ENCODE measurements at regions of chr9 and their contacts with region 1.

Region 1: GRCh38 chr9:72292256-72292682 is 72.7 kb downstream of the ZFAND5 start:
- DNase-seq: peak; percentile 48
- H3K4me3 Mint-ChIP-seq: no peak overlapping the region
- H3K27ac Mint-ChIP-seq: peak overlapping the region; percentile 75
- H3K4me1 Mint-ChIP-seq: peaks cover 22% of the 10 kb centered on the region
- H3K27me3 Mint-ChIP-seq: no peaks in the 10 kb centered on the region
- CTCF ChIP-seq: peak; percentile 58

Region 2: GRCh38 chr9:72220582-72220981 is 71.7 kb before region 1 on chr9:
- CTCF ChIA-PET with region 1: no interaction called
- POLR2A ChIA-PET with region 1: no interaction called
- intact Hi-C with region 1: no loop called
- DNase-seq: no peak
- H3K4me3 Mint-ChIP-seq: no peak overlapping the region
- H3K27ac Mint-ChIP-seq: no peak overlapping the region
- H3K4me1 Mint-ChIP-seq: peaks cover 6% of the 10 kb centered on the region
- H3K27me3 Mint-ChIP-seq: peaks cover 18% of the 10 kb centered on the region
- CTCF ChIP-seq: no peak

Region 3: DNA sequence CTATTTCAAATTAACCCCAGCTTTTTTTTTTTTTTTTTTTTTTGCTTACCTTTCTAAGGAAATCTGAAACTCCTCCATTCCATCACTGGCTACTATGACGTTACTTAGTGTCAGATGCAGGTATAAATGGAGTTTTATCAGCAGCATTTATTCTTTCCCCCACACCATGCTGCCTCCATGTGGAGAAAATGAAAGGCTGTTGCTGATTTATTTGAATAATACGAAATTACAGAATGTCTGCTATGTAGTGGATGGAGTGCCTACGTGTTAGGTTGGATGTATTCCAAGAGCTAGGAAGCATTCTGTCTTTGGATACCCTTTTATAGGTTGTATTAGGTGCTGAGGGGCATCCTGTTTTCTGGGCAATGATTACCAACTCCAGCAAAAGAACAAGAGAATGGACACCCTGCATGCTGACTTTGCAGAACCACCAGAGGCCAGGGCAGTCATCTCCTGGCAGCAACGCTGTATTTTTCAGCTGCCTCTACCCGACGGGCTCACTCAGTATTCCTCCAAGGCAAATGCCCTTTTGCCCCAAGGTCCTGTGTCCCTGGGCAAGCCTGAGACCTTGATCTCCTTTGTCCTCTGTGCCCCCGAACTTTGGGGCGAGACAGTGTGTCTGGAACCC is 461.1 kb after region 1 on chr9:
- CTCF ChIA-PET with region 1: interaction called, 42 read pairs
- POLR2A ChIA-PET with region 1: interaction called, 4 read pairs
- intact Hi-C with region 1: loop called (anchors 1 kb)
- DNase-seq: peak; percentile 32
- H3K4me3 Mint-ChIP-seq: no peak overlapping the region
- H3K27ac Mint-ChIP-seq: no peak overlapping the region
- H3K4me1 Mint-ChIP-seq: no peaks in the 10 kb centered on the region
- H3K27me3 Mint-ChIP-seq: peaks cover 53% of the 10 kb centered on the region
- CTCF ChIP-seq: peak; percentile 32

Measured in MCF 10A (cell line).